ENCODE measurements at regions of chr6 and their contacts with region 1.

Region 1: GRCh38 chr6:152552616-152553209 is 84.4 kb downstream of the SYNE1 start:
- DNase-seq: peak; percentile 37
- H3K4me3 ChIP-seq: no peak overlapping the region
- H3K27ac ChIP-seq: no peak overlapping the region
- H3K27me3 ChIP-seq: no peaks in the 10 kb centered on the region
- CTCF ChIP-seq: peak; percentile 97

Region 2: DNA sequence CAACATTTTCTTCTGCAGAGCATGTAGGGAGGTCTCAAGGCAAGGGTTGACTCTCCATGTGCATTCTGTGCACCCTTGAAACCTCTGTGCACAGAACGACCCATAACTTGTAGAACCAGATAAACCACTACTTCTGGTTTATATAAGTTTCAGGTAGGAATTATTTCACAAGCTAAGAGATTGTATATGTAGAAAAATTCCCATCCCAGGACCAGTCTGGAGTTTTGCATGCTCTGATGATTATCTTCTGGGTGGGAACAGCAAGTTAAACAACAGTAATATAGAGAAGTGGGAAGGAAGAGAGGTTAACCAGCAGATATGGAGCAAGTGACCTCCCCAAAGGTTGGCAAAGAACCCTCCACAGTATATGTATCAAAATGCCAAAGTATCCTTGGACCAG is 20.1 kb before region 1 on chr6:
- CTCF ChIA-PET with region 1: interaction called, 36 read pairs
- POLR2A ChIA-PET with region 1: no interaction called
- DNase-seq: no peak
- H3K4me3 ChIP-seq: no peak overlapping the region
- H3K27ac ChIP-seq: no peak overlapping the region
- H3K27me3 ChIP-seq: no peaks in the 10 kb centered on the region
- CTCF ChIP-seq: no peak

Region 3: GRCh38 chr6:152642989-152643388 is 90.3 kb after region 1 on chr6:
- CTCF ChIA-PET with region 1: interaction called, 18 read pairs
- POLR2A ChIA-PET with region 1: no interaction called
- DNase-seq: no peak
- H3K4me3 ChIP-seq: no peak overlapping the region
- H3K27ac ChIP-seq: no peak overlapping the region
- H3K27me3 ChIP-seq: no peaks in the 10 kb centered on the region
- CTCF ChIP-seq: peak; percentile 57

Region 4: GRCh38 chr6:152669895-152670294 is 117.2 kb after region 1 on chr6:
- CTCF ChIA-PET with region 1: interaction called, 81 read pairs
- POLR2A ChIA-PET with region 1: no interaction called
- DNase-seq: no peak
- H3K4me3 ChIP-seq: no peak overlapping the region
- H3K27ac ChIP-seq: no peak overlapping the region
- H3K27me3 ChIP-seq: no peaks in the 10 kb centered on the region
- CTCF ChIP-seq: peak; percentile 62

Region 5: DNA sequence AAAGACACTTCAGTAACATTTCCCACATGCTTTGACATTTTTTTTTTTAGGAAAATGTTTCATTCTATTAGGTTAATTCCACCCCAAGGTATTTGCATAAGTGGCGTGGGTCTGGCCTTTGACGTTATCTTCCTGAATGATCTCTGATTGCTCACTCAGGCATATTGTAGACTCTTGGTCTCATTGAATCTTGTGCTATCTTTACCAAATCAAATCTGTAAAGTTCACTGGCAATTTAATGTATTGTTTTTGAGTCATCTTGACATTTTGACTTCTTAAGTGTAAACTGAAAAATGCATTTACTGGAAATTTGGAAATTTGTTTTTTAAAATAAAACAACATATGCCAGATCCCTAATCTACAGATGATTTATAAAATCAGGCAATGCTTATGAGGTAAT is 181.9 kb after region 1 on chr6:
- CTCF ChIA-PET with region 1: no interaction called
- POLR2A ChIA-PET with region 1: no interaction called
- DNase-seq: no peak
- H3K4me3 ChIP-seq: no peak overlapping the region
- H3K27ac ChIP-seq: no peak overlapping the region
- H3K27me3 ChIP-seq: no peaks in the 10 kb centered on the region
- CTCF ChIP-seq: no peak

Measured in AG04450 (cell line).